ENCODE measurements at regions of chr2 and their contacts with region 1.

Region 1: DNA sequence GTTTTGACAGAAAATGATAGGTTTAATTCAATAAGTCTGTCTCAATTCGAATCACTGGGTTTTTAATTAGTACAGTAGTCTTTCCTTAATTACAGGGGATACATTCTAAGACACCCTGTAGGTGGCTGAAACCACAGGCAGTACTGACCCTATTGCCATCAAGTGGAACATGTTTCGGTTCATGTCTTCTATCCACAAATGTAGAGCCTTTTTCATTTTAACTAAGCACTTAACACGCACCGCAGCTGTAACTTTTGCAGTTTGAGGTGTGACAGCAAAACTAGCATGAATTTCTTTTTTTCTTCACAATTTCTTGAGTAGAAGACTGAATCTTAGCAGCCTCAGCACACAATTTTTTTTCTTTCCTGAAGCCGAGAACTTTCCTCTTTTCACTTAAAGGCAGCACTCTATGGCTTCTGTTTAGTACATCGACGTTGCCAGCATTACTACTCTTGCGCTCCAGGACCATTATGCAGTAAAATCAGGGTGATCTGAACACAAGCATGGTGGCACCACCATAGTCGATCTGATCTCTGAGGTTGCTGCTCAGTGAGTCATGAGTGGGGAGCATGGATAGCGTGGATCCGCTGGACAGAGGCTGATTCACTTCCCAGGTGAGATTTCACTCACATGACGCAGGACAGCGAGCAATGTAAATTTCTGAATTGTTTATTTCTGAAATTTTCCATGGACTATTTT is 805.1 kb downstream of the RNF144A start:
- DNase-seq: no peak
- H3K4me3 ChIP-seq: no peak overlapping the region
- H3K27ac ChIP-seq: no peak overlapping the region
- H3K27me3 ChIP-seq: peaks cover 2% of the 10 kb centered on the region
- CTCF ChIP-seq: no peak

Region 2: GRCh38 chr2:7573166-7573825 is 149.1 kb before region 1 on chr2:
- CTCF ChIA-PET with region 1: no interaction called
- POLR2A ChIA-PET with region 1: no interaction called
- DNase-seq: no peak
- H3K4me3 ChIP-seq: no peak overlapping the region
- H3K27ac ChIP-seq: no peak overlapping the region
- H3K27me3 ChIP-seq: no peaks in the 10 kb centered on the region
- CTCF ChIP-seq: no peak

Region 3: GRCh38 chr2:8355102-8355859 is 632.9 kb after region 1 on chr2:
- CTCF ChIA-PET with region 1: interaction called, 10 read pairs
- POLR2A ChIA-PET with region 1: no interaction called
- DNase-seq: no peak
- H3K4me3 ChIP-seq: no peak overlapping the region
- H3K27ac ChIP-seq: no peak overlapping the region
- H3K27me3 ChIP-seq: no peaks in the 10 kb centered on the region
- CTCF ChIP-seq: no peak